SK-N-SH (cell line): ENCODE measurements at regions of chr14 and their contacts with region 1.

Region 1: DNA sequence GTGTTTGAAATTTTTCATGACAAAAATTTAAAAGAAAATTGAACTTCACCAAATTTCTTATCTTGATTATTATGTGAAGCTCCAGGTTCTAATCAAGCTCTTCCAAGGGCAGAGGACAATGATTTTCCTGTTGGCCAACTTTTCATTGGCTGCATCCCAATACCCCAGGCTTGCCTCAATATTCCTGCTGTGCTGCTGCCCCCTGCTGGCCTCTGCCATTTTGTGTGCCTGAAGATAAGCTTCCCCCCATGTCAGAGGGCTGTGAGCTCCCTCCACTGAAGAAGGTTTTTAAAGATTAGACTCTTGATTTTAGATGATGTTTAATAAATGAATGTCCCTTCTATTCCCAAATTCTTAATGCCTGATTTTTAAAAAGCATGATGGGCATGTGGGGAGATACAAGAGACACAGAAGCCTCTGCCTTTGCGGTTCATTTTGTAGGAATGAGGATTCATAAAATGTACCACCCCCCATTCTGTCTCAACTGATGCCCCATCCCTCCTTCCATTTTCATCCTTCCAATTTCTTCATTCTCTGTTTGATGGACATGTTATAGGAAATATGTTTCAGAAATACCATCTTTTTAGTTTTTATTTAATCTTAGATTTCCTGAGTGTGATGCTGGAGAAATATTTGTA is 76.7 kb upstream of the RGS6 start:
- DNase-seq: peak; percentile 65
- H3K4me3 ChIP-seq: no peak overlapping the region; a peak in 1 of 4 replicates
- H3K27ac ChIP-seq: no peak overlapping the region
- H3K4me1 ChIP-seq: no peaks in the 10 kb centered on the region; a peak in 2 of 4 replicates
- H3K27me3 ChIP-seq: no peaks in the 10 kb centered on the region
- CTCF ChIP-seq: peak; percentile 83
- EP300 ChIP-seq: no peak
- RAD21 ChIP-seq: peak; percentile 79

Region 2: GRCh38 chr14:71834284-71835204 is 21.0 kb before region 1 on chr14:
- CTCF ChIA-PET with region 1: interaction called, 20 read pairs
- POLR2A ChIA-PET with region 1: no interaction called
- DNase-seq: no peak
- H3K4me3 ChIP-seq: no peak overlapping the region
- H3K27ac ChIP-seq: no peak overlapping the region
- H3K4me1 ChIP-seq: no peaks in the 10 kb centered on the region
- H3K27me3 ChIP-seq: no peaks in the 10 kb centered on the region; the same call in 1 of the 2 replicates
- CTCF ChIP-seq: no peak
- EP300 ChIP-seq: no peak
- RAD21 ChIP-seq: no peak